KBM-7 (cell line): ENCODE measurements at regions of chr10 and their contacts with region 1.

Region 1: GRCh38 chr10:15433850-15434537 is 62.9 kb upstream of the FAM171A1 start:
- DNase-seq: peak; percentile 75

Region 2: GRCh38 chr10:15548381-15548780 is 114.4 kb after region 1 on chr10:
- in situ Hi-C with region 1: no loop called
- DNase-seq: no peak

Region 3: DNA sequence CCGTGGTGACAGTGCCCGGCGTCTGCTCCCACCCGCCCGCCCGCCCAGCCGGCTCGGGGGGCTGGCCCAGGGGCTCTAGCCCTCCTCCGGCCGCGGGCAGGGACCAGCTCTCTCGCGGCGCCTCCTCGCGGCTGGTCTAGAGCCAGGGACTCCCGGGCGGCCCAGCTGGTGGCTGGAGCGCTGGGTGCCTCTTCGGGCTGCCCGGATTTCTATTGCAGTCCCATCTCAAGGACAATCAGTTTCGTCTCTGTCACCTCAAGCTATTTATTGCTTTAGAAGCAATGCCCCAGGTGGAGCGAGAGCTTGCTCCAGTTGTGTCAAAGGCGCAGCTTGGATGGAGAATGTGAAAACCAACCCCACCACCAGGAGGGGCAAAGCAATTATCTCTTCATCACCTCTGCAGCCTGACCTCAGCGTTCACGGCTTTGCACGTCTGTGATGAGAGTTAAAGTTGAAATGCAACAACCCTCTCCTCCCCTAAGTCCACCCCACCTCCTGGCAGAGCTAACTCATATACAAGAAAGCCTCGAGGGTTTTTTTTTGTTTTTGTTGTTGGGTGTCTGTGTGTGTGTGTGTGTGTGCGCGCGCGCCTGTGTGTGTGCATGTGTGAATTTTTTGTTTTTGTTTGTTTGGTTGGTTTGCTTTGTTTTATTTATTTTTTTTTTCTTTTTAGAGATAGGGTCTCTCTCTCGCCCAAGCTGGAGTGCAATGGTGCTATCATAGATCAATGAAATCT is 286.1 kb after region 1 on chr10 and contains the start of gene ITGA8:
- in situ Hi-C with region 1: loop called (anchors 10 kb)
- DNase-seq: peak; percentile 67